Activated B cell treated with CpG ODN at 0.5 μM for 24 hours (primary cell): ENCODE measurements at regions of chr5 and their contacts with region 1.

Region 1: DNA sequence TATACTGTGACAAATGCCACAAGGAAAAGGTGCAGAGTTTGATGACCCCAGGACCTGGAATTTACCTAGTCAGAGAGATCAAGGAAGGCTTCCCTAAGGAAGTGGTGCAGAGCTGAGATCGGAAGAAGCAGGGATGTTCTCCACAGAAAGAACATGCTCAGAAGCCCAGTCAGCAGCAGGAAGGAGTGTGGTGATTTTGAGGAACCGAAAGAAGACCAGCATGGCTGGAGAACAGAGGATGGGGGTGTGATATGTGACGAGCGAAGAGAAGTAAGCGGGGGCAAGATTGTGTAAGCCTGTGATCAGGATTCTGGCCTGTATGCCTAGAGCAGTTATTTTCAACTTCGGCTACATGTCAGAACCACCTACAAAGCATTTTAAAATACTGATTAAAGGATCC is 18.7 kb upstream of the PIK3R1 start:
- DNase-seq: peak; percentile 21
- ATAC-seq: peak; percentile 99
- H3K4me3 Mint-ChIP-seq: peak overlapping the region; percentile 0
- H3K27ac Mint-ChIP-seq: peak overlapping the region; percentile 3
- H3K4me1 Mint-ChIP-seq: peaks cover 39% of the 10 kb centered on the region
- H3K27me3 Mint-ChIP-seq: no peaks in the 10 kb centered on the region
- CTCF ChIP-seq: no peak

Region 2: GRCh38 chr5:68086857-68087256 is 110.0 kb before region 1 on chr5:
- CTCF ChIA-PET with region 1: no interaction called
- POLR2A ChIA-PET with region 1: no interaction called
- intact Hi-C with region 1: no loop called
- DNase-seq: no peak
- ATAC-seq: no peak
- H3K4me3 Mint-ChIP-seq: no peak overlapping the region
- H3K27ac Mint-ChIP-seq: no peak overlapping the region
- H3K4me1 Mint-ChIP-seq: no peaks in the 10 kb centered on the region
- H3K27me3 Mint-ChIP-seq: peaks cover 2% of the 10 kb centered on the region
- CTCF ChIP-seq: no peak

Region 3: GRCh38 chr5:68141494-68141893 is 55.4 kb before region 1 on chr5:
- CTCF ChIA-PET with region 1: no interaction called
- POLR2A ChIA-PET with region 1: no interaction called
- intact Hi-C with region 1: loop called (anchors 2 kb)
- DNase-seq: no peak
- ATAC-seq: peak; percentile 82
- H3K4me3 Mint-ChIP-seq: peak overlapping the region; percentile 12
- H3K27ac Mint-ChIP-seq: no peak overlapping the region
- H3K4me1 Mint-ChIP-seq: peaks cover 17% of the 10 kb centered on the region
- H3K27me3 Mint-ChIP-seq: no peaks in the 10 kb centered on the region
- CTCF ChIP-seq: no peak

Region 4: DNA sequence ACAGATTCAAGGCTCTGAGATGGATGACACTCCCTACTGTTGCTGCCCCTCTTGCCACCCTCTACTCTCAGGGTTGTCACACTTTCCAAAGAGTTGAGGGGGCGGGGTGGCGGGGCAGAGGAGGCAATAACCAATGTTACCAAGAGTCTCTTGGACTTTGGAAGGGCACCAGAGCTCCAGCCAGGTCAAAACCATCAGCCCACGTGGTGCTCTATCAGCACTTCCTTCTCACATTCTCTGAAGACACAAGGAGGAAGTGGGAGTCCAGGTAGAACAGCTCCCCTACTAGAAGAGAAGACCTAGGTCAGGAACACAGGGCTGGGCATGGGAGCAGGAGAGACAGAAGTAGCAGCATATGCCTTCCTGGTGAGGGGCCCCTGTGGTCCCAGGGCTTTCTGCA is 14.3 kb before region 1 on chr5:
- CTCF ChIA-PET with region 1: no interaction called
- POLR2A ChIA-PET with region 1: no interaction called
- intact Hi-C with region 1: no loop called
- DNase-seq: no peak
- ATAC-seq: no peak
- H3K4me3 Mint-ChIP-seq: no peak overlapping the region
- H3K27ac Mint-ChIP-seq: no peak overlapping the region
- H3K4me1 Mint-ChIP-seq: peaks cover 3% of the 10 kb centered on the region
- H3K27me3 Mint-ChIP-seq: no peaks in the 10 kb centered on the region
- CTCF ChIP-seq: no peak